ENCODE measurements at regions of chrX and their contacts with region 1.

Region 1: GRCh38 chrX:132615391-132616131 is 126.7 kb upstream of the MBNL3 start:
- DNase-seq: peak in 1 of 3 donors; percentile 44
- ATAC-seq: peak in 1 of 2 donors; percentile 46
- H3K4me3 ChIP-seq: no peak overlapping the region
- H3K27ac ChIP-seq: no peak overlapping the region
- H3K4me1 ChIP-seq: no peaks in the 10 kb centered on the region
- H3K27me3 ChIP-seq: no peaks in the 10 kb centered on the region

Region 2: GRCh38 chrX:132226169-132226568 is 389.4 kb before region 1 on chrX:
- intact Hi-C with region 1: loop called in 1 of 4 experiments (anchors 10 kb)
- DNase-seq: no peak
- ATAC-seq: no peak
- H3K4me3 ChIP-seq: no peak overlapping the region
- H3K27ac ChIP-seq: no peak overlapping the region
- H3K4me1 ChIP-seq: peaks cover 2% of the 10 kb centered on the region
- H3K27me3 ChIP-seq: no peaks in the 10 kb centered on the region

Region 3: DNA sequence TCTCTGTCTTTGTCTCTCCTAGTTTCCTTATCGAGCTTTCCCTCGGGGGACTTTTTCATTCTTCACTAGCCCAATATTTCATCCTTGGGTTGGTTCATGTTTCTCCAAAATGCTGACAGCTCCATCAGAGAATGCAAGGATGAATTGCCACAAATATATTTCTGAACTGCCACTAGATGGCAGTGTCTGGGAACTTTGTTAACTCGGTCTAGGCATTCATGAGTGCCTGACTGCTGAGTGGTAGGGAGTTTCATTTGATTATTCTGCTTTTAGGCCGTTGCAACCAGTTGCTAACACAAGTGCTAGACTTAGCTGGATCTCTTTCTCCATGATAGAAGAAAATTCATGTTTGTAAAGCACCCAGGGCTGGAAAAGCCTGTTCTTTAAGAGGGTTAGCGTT is 322.8 kb before region 1 on chrX:
- intact Hi-C with region 1: loop called (anchors 10 kb)
- DNase-seq: no peak
- ATAC-seq: peak; percentile 62 to 67
- H3K4me3 ChIP-seq: no peak overlapping the region
- H3K27ac ChIP-seq: no peak overlapping the region
- H3K4me1 ChIP-seq: no peaks in the 10 kb centered on the region
- H3K27me3 ChIP-seq: no peaks in the 10 kb centered on the region